MCF 10A (cell line): ENCODE measurements at regions of chr18 and their contacts with region 1.

Region 1: GRCh38 chr18:31241900-31242409 is 76.0 kb upstream of the DSG1 start:
- DNase-seq: peak; percentile 96
- H3K4me3 Mint-ChIP-seq: peak overlapping the region; percentile 41
- H3K27ac Mint-ChIP-seq: peak overlapping the region; percentile 84
- H3K4me1 Mint-ChIP-seq: peaks cover 36% of the 10 kb centered on the region
- H3K27me3 Mint-ChIP-seq: no peaks in the 10 kb centered on the region
- CTCF ChIP-seq: peak; percentile 58

Region 2: DNA sequence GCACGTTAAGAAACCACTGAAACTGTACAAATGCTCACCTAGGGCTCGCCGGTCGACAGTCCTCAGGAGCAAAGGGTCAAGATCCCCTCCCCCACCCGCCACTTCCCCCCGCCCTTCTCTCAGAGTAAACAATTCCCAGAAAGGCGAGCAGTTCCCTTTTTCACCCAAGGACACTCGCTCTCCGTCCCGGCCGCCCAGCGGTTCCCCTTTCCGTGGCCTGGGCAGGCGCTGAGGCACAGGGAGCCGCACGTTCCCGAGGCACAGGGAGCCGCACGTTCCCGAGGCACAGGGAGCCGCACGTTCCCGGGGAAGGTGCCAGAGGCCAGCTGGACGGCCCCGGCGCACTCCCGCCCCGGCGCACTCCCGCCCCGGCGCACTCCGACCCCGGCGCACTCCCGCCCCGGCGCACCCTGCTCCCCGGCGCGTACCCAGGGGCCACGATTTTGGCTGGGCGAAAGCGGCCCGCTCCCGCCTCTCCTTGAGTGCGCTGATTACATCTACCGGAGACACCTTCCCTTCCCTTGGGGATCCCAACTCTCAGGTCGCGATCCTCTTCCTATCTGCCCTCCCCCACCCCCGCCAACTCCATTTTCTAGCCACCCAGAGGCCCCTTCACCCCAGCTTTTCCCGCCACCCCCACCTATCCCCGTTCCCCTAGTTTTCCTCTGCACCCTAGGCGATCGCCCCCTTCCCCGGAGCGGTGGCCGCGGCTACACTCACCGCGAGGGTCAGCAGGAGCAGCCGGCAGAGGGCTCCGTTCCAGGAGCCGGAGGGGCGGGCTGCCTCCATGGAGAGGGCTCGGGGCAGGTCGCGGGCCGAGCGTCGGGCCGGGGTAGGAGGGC is 140.6 kb before region 1 on chr18:
- CTCF ChIA-PET with region 1: interaction called, 3 read pairs
- POLR2A ChIA-PET with region 1: interaction called, 154 read pairs
- intact Hi-C with region 1: loop called (anchors 5 kb)
- DNase-seq: peak; percentile 53
- H3K4me3 Mint-ChIP-seq: peak overlapping the region; percentile 82
- H3K27ac Mint-ChIP-seq: peak overlapping the region; percentile 81
- H3K4me1 Mint-ChIP-seq: peaks cover 30% of the 10 kb centered on the region
- H3K27me3 Mint-ChIP-seq: no peaks in the 10 kb centered on the region
- CTCF ChIP-seq: no peak

Region 3: GRCh38 chr18:31206787-31207381 is 35.1 kb before region 1 on chr18:
- CTCF ChIA-PET with region 1: interaction called, 8 read pairs
- POLR2A ChIA-PET with region 1: interaction called, 37 read pairs
- intact Hi-C with region 1: no loop called
- DNase-seq: peak; percentile 94
- H3K4me3 Mint-ChIP-seq: peak overlapping the region; percentile 69
- H3K27ac Mint-ChIP-seq: peak overlapping the region; percentile 77
- H3K4me1 Mint-ChIP-seq: peaks cover 32% of the 10 kb centered on the region
- H3K27me3 Mint-ChIP-seq: no peaks in the 10 kb centered on the region
- CTCF ChIP-seq: peak; percentile 7

Region 4: GRCh38 chr18:31255953-31256352 is 14.0 kb after region 1 on chr18:
- CTCF ChIA-PET with region 1: interaction called, 11 read pairs
- POLR2A ChIA-PET with region 1: interaction called, 160 read pairs
- intact Hi-C with region 1: no loop called
- DNase-seq: peak; percentile 85
- H3K4me3 Mint-ChIP-seq: peak overlapping the region; percentile 12
- H3K27ac Mint-ChIP-seq: peak overlapping the region; percentile 64
- H3K4me1 Mint-ChIP-seq: peaks cover 16% of the 10 kb centered on the region
- H3K27me3 Mint-ChIP-seq: no peaks in the 10 kb centered on the region
- CTCF ChIP-seq: no peak

Region 5: DNA sequence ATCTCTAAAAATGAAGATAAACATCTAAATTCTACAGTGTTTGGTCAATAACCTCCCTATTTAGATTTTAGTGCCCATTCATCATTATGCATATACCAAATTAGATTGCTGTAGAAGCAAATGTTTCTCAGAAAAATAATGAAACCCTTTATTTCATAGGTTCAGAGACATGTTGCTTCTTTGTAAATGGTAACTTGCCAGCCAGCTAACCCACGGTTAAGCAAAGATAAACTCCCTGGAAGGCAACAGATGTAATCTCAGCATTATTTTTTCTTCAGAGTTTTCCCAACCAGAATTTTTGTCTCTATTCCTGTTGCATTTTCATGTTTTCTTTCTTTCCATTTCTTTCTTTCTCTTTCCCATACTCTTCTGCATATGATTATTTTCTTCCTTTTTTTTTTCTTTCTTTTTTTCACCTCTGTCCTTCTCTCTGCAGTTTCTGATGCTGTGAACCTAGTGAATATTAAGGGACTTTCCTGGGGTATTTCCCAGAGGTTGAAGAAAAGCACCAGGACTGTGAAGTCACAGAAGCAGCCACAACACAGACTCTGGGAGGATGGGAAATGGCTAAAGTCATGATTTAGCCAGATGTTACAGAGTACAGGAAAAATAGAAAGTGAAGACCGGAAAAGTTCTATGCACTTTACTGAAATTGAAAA is 26.0 kb after region 1 on chr18:
- CTCF ChIA-PET with region 1: interaction called, 6 read pairs
- POLR2A ChIA-PET with region 1: interaction called, 89 read pairs
- intact Hi-C with region 1: no loop called
- DNase-seq: no peak
- H3K4me3 Mint-ChIP-seq: peak overlapping the region; percentile 12
- H3K27ac Mint-ChIP-seq: peak overlapping the region; percentile 84
- H3K4me1 Mint-ChIP-seq: peaks cover 28% of the 10 kb centered on the region
- H3K27me3 Mint-ChIP-seq: no peaks in the 10 kb centered on the region
- CTCF ChIP-seq: no peak

Region 6: GRCh38 chr18:31454066-31454708 is 212.2 kb after region 1 on chr18:
- CTCF ChIA-PET with region 1: interaction called, 3 read pairs
- POLR2A ChIA-PET with region 1: interaction called, 187 read pairs
- intact Hi-C with region 1: no loop called
- DNase-seq: peak; percentile 96
- H3K4me3 Mint-ChIP-seq: peak overlapping the region; percentile 67
- H3K27ac Mint-ChIP-seq: peak overlapping the region; percentile 94
- H3K4me1 Mint-ChIP-seq: peaks cover 23% of the 10 kb centered on the region
- H3K27me3 Mint-ChIP-seq: no peaks in the 10 kb centered on the region
- CTCF ChIP-seq: no peak

Region 7: GRCh38 chr18:31685097-31686082 is 443.4 kb after region 1 on chr18:
- CTCF ChIA-PET with region 1: no interaction called
- POLR2A ChIA-PET with region 1: no interaction called
- intact Hi-C with region 1: no loop called
- DNase-seq: peak; percentile 75
- H3K4me3 Mint-ChIP-seq: peak overlapping the region; percentile 87
- H3K27ac Mint-ChIP-seq: no peak overlapping the region
- H3K4me1 Mint-ChIP-seq: peaks cover 24% of the 10 kb centered on the region
- H3K27me3 Mint-ChIP-seq: no peaks in the 10 kb centered on the region
- CTCF ChIP-seq: peak; percentile 30